PC-3 (cell line): ENCODE measurements at regions of chr10 and their contacts with region 1.

Region 1: GRCh38 chr10:93088466-93088865 is 14.8 kb downstream of the CYP26A1 start:
- DNase-seq: no peak
- ATAC-seq: no peak
- H3K4me3 ChIP-seq: no peak overlapping the region
- H3K27ac ChIP-seq: no peak overlapping the region
- H3K4me1 ChIP-seq: no peaks in the 10 kb centered on the region
- H3K27me3 ChIP-seq: no peaks in the 10 kb centered on the region
- CTCF ChIP-seq: no peak

Region 2: GRCh38 chr10:92432596-92432995 is 655.9 kb before region 1 on chr10:
- CTCF ChIA-PET with region 1: no interaction called
- POLR2A ChIA-PET with region 1: no interaction called
- intact Hi-C with region 1: no loop called
- DNase-seq: no peak
- ATAC-seq: no peak
- H3K4me3 ChIP-seq: no peak overlapping the region
- H3K27ac ChIP-seq: no peak overlapping the region
- H3K4me1 ChIP-seq: no peaks in the 10 kb centered on the region
- H3K27me3 ChIP-seq: no peaks in the 10 kb centered on the region
- CTCF ChIP-seq: no peak

Region 3: DNA sequence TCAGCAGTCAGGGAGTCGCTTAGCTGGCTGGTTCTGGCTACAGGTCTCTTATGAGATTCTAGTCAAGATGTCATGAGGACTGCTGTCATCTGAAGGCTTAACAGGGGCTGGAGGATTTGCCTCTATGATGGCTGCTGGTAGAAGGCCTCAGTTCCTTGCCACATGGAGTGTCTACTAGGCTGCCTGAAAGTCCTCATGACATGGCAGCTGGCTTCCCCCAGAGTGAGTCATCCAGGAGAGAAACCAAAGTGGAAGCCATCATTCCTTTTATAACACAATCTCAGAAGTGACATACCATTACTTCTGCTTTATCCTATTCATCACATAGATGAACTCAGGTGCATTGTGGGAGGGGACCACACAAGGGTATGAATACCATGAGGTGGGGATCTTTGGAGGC is 165.1 kb before region 1 on chr10:
- CTCF ChIA-PET with region 1: no interaction called
- POLR2A ChIA-PET with region 1: no interaction called
- intact Hi-C with region 1: no loop called
- DNase-seq: no peak
- ATAC-seq: no peak
- H3K4me3 ChIP-seq: no peak overlapping the region
- H3K27ac ChIP-seq: no peak overlapping the region
- H3K4me1 ChIP-seq: no peaks in the 10 kb centered on the region
- H3K27me3 ChIP-seq: no peaks in the 10 kb centered on the region
- CTCF ChIP-seq: no peak

Region 4: GRCh38 chr10:93180482-93180931 is 92.0 kb after region 1 on chr10:
- CTCF ChIA-PET with region 1: no interaction called
- POLR2A ChIA-PET with region 1: no interaction called
- intact Hi-C with region 1: no loop called
- DNase-seq: no peak
- ATAC-seq: no peak
- H3K4me3 ChIP-seq: no peak overlapping the region
- H3K27ac ChIP-seq: no peak overlapping the region
- H3K4me1 ChIP-seq: no peaks in the 10 kb centered on the region
- H3K27me3 ChIP-seq: no peaks in the 10 kb centered on the region
- CTCF ChIP-seq: no peak

Region 5: DNA sequence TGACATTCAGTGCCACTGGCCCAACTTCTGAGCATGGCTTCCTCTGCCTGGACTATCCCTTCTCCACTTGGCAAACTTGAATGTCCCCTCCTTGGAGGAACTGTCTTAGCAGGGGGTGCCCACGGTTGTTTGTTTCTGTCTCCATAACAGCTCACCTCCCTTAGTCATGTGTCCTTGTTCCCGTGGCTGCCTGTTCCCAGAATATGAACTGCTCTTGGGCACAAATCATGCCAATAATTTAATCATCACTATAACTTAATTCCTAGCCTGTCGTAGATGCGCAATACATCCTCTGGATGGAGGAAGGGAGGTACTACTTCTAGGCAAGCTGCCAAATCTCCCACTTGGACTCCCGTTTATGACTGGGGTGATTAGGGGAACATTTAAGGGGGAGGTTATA is 220.6 kb after region 1 on chr10:
- CTCF ChIA-PET with region 1: no interaction called
- POLR2A ChIA-PET with region 1: interaction called, 10 read pairs
- intact Hi-C with region 1: no loop called
- DNase-seq: no peak
- ATAC-seq: no peak
- H3K4me3 ChIP-seq: no peak overlapping the region
- H3K27ac ChIP-seq: no peak overlapping the region
- H3K4me1 ChIP-seq: no peaks in the 10 kb centered on the region
- H3K27me3 ChIP-seq: no peaks in the 10 kb centered on the region
- CTCF ChIP-seq: no peak